ENCODE measurements at regions of chr9 and their contacts with region 1.

Region 1: GRCh38 chr9:114161513-114161912 is 6.2 kb downstream of the COL27A1 start:
- DNase-seq: no peak
- H3K4me3 Mint-ChIP-seq: no peak overlapping the region
- H3K27ac Mint-ChIP-seq: no peak overlapping the region
- H3K4me1 Mint-ChIP-seq: no peaks in the 10 kb centered on the region
- H3K27me3 Mint-ChIP-seq: peaks cover 9% of the 10 kb centered on the region

Region 2: GRCh38 chr9:114172981-114173833 is 11.7 kb after region 1 on chr9:
- CTCF ChIA-PET with region 1: interaction called, 11 read pairs
- POLR2A ChIA-PET with region 1: no interaction called
- DNase-seq: no peak
- H3K4me3 Mint-ChIP-seq: no peak overlapping the region
- H3K27ac Mint-ChIP-seq: no peak overlapping the region
- H3K4me1 Mint-ChIP-seq: no peaks in the 10 kb centered on the region
- H3K27me3 Mint-ChIP-seq: no peaks in the 10 kb centered on the region

Measured in activated CD4-positive, alpha-beta T cell treated with anti-CD3 and anti-CD28 coated beads, Interleukin-2, amount 10 ng/mL, durations not matched to agents 7 days and 5 days (primary cell).